ENCODE measurements at regions of chr20 and their contacts with region 1.

Region 1: GRCh38 chr20:47382746-47383415 is 26.4 kb upstream of the ZMYND8 start:
- DNase-seq: no peak
- H3K4me3 ChIP-seq: no peak overlapping the region
- H3K27ac ChIP-seq: peak overlapping the region in 1 of 4 donors; percentile 76
- H3K4me1 ChIP-seq: peaks cover 16 to 35% (median 29%) of the 10 kb centered on the region in 4 donors
- H3K27me3 ChIP-seq: no peaks in the 10 kb centered on the region
- CTCF ChIP-seq: no peak
- EP300 ChIP-seq: no peak
- POLR2A ChIP-seq: no peak

Region 2: DNA sequence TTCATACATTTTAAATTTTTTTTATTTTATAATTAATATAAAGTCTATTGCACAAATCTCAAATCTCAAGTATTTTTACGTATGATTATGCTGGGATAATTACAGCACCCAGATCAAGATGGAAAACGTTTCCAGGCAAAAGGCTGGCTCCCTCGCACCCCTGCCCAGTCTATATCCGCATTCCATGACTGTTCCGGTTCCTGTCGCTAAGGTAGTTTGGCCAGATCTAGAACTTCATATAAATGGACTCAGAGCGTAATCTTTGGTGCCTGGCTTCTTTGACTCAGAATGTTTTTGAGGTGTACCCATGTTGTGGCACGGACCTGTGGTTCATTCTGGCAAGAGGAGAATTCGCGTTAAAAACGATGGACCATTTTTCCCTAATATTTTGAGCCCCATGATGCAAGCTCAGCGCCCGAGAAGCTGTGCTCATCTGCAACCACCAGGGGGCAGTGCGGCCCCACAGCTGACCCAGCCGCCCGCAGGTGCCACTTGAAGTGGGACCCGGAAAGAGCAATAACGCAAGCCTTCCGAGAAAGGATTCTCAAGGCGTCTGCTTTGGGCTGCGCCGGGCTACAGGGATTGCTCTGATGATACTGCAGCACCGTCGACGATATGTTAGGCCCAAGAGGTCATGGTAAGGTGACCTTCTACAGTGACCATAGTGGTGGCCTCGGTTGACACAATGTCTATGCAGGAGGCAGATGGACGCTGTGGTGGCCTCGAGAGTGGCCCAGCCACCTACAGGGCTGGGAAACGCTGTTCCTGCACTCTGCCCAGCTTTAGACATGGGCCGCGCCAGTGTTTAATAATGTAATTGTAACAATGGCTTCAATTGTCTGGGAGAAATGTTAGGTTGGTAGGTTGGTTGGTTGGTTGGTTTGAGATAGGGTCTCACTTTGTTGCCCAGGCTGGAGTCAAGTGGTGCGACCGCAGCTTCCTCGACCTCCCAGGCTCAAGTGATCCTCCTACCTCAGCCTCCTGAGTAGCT is 186.5 kb before region 1 on chr20:
- intact Hi-C with region 1: loop called (anchors 2 kb)
- DNase-seq: peak; percentile 93
- H3K4me3 ChIP-seq: no peak overlapping the region
- H3K27ac ChIP-seq: no peak overlapping the region
- H3K4me1 ChIP-seq: peaks cover 8 to 12% (median 10%) of the 10 kb centered on the region in 4 donors
- H3K27me3 ChIP-seq: no peaks in the 10 kb centered on the region
- CTCF ChIP-seq: peak in 2 of 3 experiments; percentile 94
- EP300 ChIP-seq: no peak
- POLR2A ChIP-seq: no peak

Measured in esophagus muscularis mucosa (tissue), 4 donors.